T-cell (primary cell): ENCODE measurements at regions of chr19 and their contacts with region 1.

Region 1: DNA sequence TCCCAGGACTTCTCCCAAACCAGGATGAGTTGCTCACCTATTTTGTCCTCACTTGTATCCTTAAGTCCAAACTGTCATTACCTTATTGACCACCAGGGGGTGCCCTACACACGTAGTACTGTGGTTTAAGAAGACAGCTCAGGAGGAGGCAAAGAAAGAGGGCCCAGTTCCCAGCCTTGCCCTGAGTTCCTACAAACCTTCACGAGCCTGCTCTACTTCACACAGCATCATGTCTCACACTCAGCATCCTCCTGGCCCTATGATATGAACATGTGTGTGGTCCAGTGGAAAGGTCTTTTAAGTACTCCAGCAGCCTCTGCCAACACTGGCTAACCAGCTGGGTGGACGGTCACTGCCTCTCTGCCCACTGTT is 8.1 kb upstream of the ZNF784 start:
- DNase-seq: peak; percentile 61 to 97 (median 83)
- ATAC-seq: peak; percentile 42 to 55 (median 47)
- H3K4me3 ChIP-seq: no peak overlapping the region
- H3K4me3 Mint-ChIP-seq: peak overlapping the region in 1 of 3 donors; percentile 2
- H3K27ac ChIP-seq: no peak overlapping the region
- H3K27ac Mint-ChIP-seq: peak overlapping the region; percentile 57 to 66
- H3K4me1 ChIP-seq: peaks cover 17 to 44% of the 10 kb centered on the region in 2 experiments
- H3K4me1 Mint-ChIP-seq: peaks cover 44 to 49% (median 45%) of the 10 kb centered on the region in 3 donors
- H3K27me3 ChIP-seq: peaks cover 0 to 3% of the 10 kb centered on the region in 2 experiments
- H3K27me3 Mint-ChIP-seq: no peaks in the 10 kb centered on the region

Region 2: GRCh38 chr19:55283548-55284380 is 348.7 kb before region 1 on chr19 and contains the start of gene BRSK1:
- CTCF ChIA-PET with region 1: no interaction called
- POLR2A ChIA-PET with region 1: no interaction called
- DNase-seq: peak in 27 of 35 experiments; percentile 24 to 60 (median 43)
- ATAC-seq: no peak
- H3K4me3 ChIP-seq: no peak within 1 kb of the TSS
- H3K4me3 Mint-ChIP-seq: peak within 1 kb of the TSS; percentile 42 to 50 (median 47)
- H3K27ac ChIP-seq: no peak within 1 kb of the TSS
- H3K27ac Mint-ChIP-seq: peak within 1 kb of the TSS; percentile 4 to 77
- H3K4me1 ChIP-seq: peaks cover 9 to 41% of the 10 kb centered on the region in 2 experiments
- H3K4me1 Mint-ChIP-seq: peaks cover 25 to 36% (median 26%) of the 10 kb centered on the region in 3 donors
- H3K27me3 ChIP-seq: peaks cover 0 to 2% of the 10 kb centered on the region in 2 experiments
- H3K27me3 Mint-ChIP-seq: no peaks in the 10 kb centered on the region
- total RNA-seq, gene BRSK1: 2.9 to 5.8 (median 3.9) TPM

Region 3: DNA sequence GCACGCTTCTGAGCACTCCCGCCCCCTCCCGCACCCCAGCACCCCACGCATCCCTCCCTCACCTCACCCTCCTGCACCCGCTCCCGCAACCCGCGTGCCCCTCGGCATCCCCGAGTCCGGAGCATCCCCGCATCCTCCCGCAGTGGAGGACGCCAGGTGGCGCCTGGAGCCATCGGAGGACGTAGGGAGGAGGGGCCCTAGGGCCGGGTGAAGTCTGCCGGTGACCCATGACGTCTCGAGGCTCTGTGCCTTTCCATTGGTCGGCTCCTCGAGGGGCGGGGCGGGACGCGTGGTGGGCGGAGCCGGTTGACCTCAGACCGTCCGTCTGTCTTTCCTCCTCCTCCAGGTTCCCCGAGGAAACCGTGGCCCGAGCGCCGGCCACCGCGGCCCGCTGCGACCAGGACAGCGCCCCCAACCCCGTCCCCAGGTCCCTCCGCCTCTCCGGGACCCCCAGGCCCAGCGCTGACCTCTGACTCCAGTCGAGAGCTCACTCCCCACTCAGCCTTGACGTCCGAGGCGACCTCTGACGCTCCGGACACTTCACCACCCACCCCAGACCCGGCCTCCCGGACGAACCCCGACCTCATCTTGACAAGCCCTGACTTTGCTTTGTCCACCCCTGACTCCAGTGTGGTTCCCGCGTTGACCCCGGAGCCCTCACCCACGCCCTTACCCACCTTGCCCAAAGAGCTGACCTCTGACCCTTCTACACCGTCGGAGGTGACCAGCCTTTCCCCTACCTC is 115.4 kb before region 1 on chr19:
- CTCF ChIA-PET with region 1: interaction called, 4 to 11 read pairs
- POLR2A ChIA-PET with region 1: no interaction called
- DNase-seq: peak; percentile 72 to 94 (median 83)
- ATAC-seq: peak; percentile 99 to 100 (median 100)
- H3K4me3 ChIP-seq: peak overlapping the region; percentile 4 to 37
- H3K4me3 Mint-ChIP-seq: peak overlapping the region; percentile 68 to 70 (median 69)
- H3K27ac ChIP-seq: peak overlapping the region; percentile 65
- H3K27ac Mint-ChIP-seq: peak overlapping the region in 1 of 2 donors; percentile 68
- H3K4me1 ChIP-seq: peaks cover 0 to 12% of the 10 kb centered on the region in 2 experiments
- H3K4me1 Mint-ChIP-seq: peaks cover 0 to 4% (median 4%) of the 10 kb centered on the region in 3 donors
- H3K27me3 ChIP-seq: peaks cover 0 to 34% of the 10 kb centered on the region in 2 experiments
- H3K27me3 Mint-ChIP-seq: peaks cover 6 to 13% of the 10 kb centered on the region in 2 donors

Region 4: DNA sequence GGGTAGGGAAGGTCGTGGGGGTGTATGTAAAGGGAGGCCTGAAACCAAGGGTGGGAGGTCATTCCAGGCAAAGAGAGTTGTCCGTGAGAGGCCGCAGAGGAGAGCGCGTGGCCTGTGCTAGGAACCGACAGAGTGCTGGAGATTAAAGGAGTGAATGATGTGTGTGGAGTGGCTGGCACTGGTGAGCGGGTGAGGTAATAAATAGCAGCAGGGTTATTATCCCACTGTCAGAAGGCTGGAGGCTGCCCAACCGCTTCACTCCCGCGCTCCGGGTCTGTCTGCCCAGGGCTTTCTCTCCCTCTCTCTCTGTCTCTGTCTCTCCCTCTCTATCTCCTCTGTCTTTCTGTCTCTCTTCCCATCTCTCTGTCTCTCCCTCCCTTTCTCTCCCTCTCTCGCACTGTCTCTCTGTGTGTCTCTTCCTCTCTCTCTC is 69.2 kb before region 1 on chr19:
- CTCF ChIA-PET with region 1: no interaction called
- POLR2A ChIA-PET with region 1: no interaction called
- DNase-seq: no peak
- ATAC-seq: no peak
- H3K4me3 ChIP-seq: no peak overlapping the region
- H3K4me3 Mint-ChIP-seq: no peak overlapping the region
- H3K27ac ChIP-seq: no peak overlapping the region
- H3K27ac Mint-ChIP-seq: no peak overlapping the region
- H3K4me1 ChIP-seq: no peaks in the 10 kb centered on the region
- H3K4me1 Mint-ChIP-seq: no peaks in the 10 kb centered on the region
- H3K27me3 ChIP-seq: peaks cover 0 to 48% of the 10 kb centered on the region in 2 experiments
- H3K27me3 Mint-ChIP-seq: peaks cover 9 to 28% of the 10 kb centered on the region in 2 donors

Region 5: GRCh38 chr19:55599468-55600279 is 32.8 kb before region 1 on chr19 and contains the start of gene FIZ1:
- CTCF ChIA-PET with region 1: interaction called in 1 of 2 experiments, 16 read pairs
- POLR2A ChIA-PET with region 1: interaction called in 1 of 2 experiments, 3 read pairs
- DNase-seq: peak; percentile 86 to 97 (median 92)
- ATAC-seq: peak; percentile 75 to 78 (median 76)
- H3K4me3 ChIP-seq: peak within 1 kb of the TSS; percentile 86 to 97
- H3K4me3 Mint-ChIP-seq: peak within 1 kb of the TSS; percentile 98 to 99 (median 98)
- H3K27ac ChIP-seq: peak within 1 kb of the TSS; percentile 97
- H3K27ac Mint-ChIP-seq: peak within 1 kb of the TSS; percentile 100
- H3K4me1 ChIP-seq: peaks cover 7 to 33% of the 10 kb centered on the region in 2 experiments
- H3K4me1 Mint-ChIP-seq: peaks cover 25 to 44% (median 27%) of the 10 kb centered on the region in 3 donors
- H3K27me3 ChIP-seq: no peaks in the 10 kb centered on the region
- H3K27me3 Mint-ChIP-seq: no peaks in the 10 kb centered on the region
- total RNA-seq, gene FIZ1: 9.8 to 27.7 (median 19.0) TPM

Region 6: DNA sequence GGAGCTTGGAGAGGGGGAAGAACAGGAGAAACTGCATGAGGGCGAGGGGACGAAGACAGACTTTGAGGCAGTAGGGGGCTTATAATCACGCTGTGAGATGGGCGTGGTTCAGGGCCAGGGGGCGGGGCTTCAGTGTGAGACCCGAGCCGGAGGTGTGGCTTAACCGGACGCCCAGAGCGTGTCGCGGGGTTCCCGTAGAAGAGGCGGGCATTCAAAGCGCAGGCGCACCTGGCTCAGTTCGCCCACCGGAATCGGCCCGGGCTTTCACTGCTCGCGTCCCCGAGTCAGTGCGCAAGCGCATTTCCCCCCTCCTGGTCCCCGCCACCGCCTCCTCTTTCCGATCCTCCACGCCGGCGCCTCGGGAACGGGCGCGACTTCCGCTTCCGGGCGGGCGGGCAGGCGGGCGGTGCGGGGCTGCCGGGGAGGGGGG is 27.2 kb before region 1 on chr19:
- CTCF ChIA-PET with region 1: interaction called, 12 to 16 read pairs
- POLR2A ChIA-PET with region 1: no interaction called
- DNase-seq: peak; percentile 90 to 99 (median 96)
- ATAC-seq: peak; percentile 72 to 80 (median 77)
- H3K4me3 ChIP-seq: peak overlapping the region; percentile 51 to 84
- H3K4me3 Mint-ChIP-seq: peak overlapping the region; percentile 78 to 86 (median 83)
- H3K27ac ChIP-seq: peak overlapping the region; percentile 74
- H3K27ac Mint-ChIP-seq: peak overlapping the region; percentile 88 to 91
- H3K4me1 ChIP-seq: peaks cover 17 to 53% of the 10 kb centered on the region in 2 experiments
- H3K4me1 Mint-ChIP-seq: peaks cover 58 to 73% (median 61%) of the 10 kb centered on the region in 3 donors
- H3K27me3 ChIP-seq: no peaks in the 10 kb centered on the region
- H3K27me3 Mint-ChIP-seq: no peaks in the 10 kb centered on the region

Region 7: DNA sequence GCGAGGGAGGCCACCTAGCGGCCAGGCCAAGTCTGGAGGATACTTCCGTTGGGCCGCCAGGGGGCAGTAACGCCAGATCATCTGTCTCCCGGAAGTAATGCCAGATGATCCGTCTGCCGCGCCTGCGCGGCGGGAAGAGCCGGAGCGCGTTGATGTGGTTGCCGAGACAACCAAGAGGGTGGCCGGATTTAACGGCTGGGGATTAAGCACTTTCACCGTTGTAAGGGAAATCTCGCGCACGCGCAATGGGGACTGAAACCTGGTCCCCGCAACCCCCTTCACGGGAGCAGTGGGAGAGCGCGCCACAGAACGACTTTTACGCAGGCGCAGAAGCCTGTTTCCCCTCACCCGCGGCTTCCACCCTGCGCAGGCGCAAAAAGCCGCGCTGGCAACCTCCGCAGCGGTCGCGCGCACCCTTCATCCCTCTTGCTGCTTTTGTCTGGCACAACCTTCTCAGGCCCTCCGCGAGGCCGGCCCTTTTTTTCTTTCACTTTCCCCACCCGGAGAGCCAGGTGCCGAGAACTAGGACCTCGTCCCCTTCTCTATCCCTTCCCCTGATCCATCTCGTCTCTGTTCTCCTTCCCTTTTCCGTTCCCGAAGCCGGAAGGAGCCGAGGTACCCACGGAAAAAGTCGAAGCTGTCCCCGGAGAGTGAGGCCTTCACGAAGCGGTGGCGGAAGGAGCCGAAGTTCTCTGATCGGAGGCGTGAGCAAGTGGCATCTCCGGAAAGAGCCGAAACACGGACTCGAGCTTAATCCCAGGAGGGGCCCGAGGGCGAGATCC is 21.5 kb after region 1 on chr19:
- CTCF ChIA-PET with region 1: interaction called, 4 to 19 read pairs
- POLR2A ChIA-PET with region 1: interaction called in 1 of 2 experiments, 3 read pairs
- DNase-seq: peak; percentile 98 to 100 (median 99)
- ATAC-seq: peak; percentile 79 to 82 (median 81)
- H3K4me3 ChIP-seq: peak overlapping the region; percentile 57 to 89
- H3K4me3 Mint-ChIP-seq: peak overlapping the region; percentile 85 to 88 (median 87)
- H3K27ac ChIP-seq: peak overlapping the region; percentile 100
- H3K27ac Mint-ChIP-seq: peak overlapping the region; percentile 95 to 99
- H3K4me1 ChIP-seq: peaks cover 17 to 51% of the 10 kb centered on the region in 2 experiments
- H3K4me1 Mint-ChIP-seq: peaks cover 46 to 52% (median 47%) of the 10 kb centered on the region in 3 donors
- H3K27me3 ChIP-seq: peaks cover 0 to 7% of the 10 kb centered on the region in 2 experiments
- H3K27me3 Mint-ChIP-seq: no peaks in the 10 kb centered on the region

Region 8: GRCh38 chr19:55678121-55678675 is 45.7 kb after region 1 on chr19:
- CTCF ChIA-PET with region 1: no interaction called
- POLR2A ChIA-PET with region 1: no interaction called
- DNase-seq: peak in 4 of 35 experiments; percentile 8 to 47 (median 20)
- ATAC-seq: no peak
- H3K4me3 ChIP-seq: no peak overlapping the region
- H3K4me3 Mint-ChIP-seq: peak overlapping the region in 2 of 3 donors; percentile 64 to 95
- H3K27ac ChIP-seq: no peak overlapping the region
- H3K27ac Mint-ChIP-seq: peak overlapping the region; percentile 28 to 55
- H3K4me1 ChIP-seq: peaks cover 10 to 69% of the 10 kb centered on the region in 2 experiments
- H3K4me1 Mint-ChIP-seq: peaks cover 50 to 69% (median 62%) of the 10 kb centered on the region in 3 donors
- H3K27me3 ChIP-seq: no peaks in the 10 kb centered on the region
- H3K27me3 Mint-ChIP-seq: no peaks in the 10 kb centered on the region

Region 9: GRCh38 chr19:56333505-56333904 is 701.1 kb after region 1 on chr19:
- CTCF ChIA-PET with region 1: interaction called in 1 of 2 experiments, 11 read pairs
- POLR2A ChIA-PET with region 1: no interaction called
- DNase-seq: peak in 26 of 35 experiments; percentile 2 to 69 (median 26)
- ATAC-seq: peak in 1 of 4 experiments; percentile 50
- H3K4me3 ChIP-seq: no peak overlapping the region
- H3K4me3 Mint-ChIP-seq: no peak overlapping the region
- H3K27ac ChIP-seq: no peak overlapping the region
- H3K27ac Mint-ChIP-seq: no peak overlapping the region
- H3K4me1 ChIP-seq: no peaks in the 10 kb centered on the region
- H3K4me1 Mint-ChIP-seq: no peaks in the 10 kb centered on the region
- H3K27me3 ChIP-seq: no peaks in the 10 kb centered on the region
- H3K27me3 Mint-ChIP-seq: peaks cover 9 to 10% of the 10 kb centered on the region in 2 donors